ENCODE measurements at regions of chr2 and their contacts with region 1.

Region 1: GRCh38 chr2:187581125-187581896 is 27.1 kb upstream of the TFPI start:
- DNase-seq: peak; percentile 45
- H3K4me3 ChIP-seq: no peak overlapping the region
- H3K27ac ChIP-seq: peak overlapping the region; percentile 67
- H3K27me3 ChIP-seq: no peaks in the 10 kb centered on the region
- CTCF ChIP-seq: peak; percentile 57

Region 2: DNA sequence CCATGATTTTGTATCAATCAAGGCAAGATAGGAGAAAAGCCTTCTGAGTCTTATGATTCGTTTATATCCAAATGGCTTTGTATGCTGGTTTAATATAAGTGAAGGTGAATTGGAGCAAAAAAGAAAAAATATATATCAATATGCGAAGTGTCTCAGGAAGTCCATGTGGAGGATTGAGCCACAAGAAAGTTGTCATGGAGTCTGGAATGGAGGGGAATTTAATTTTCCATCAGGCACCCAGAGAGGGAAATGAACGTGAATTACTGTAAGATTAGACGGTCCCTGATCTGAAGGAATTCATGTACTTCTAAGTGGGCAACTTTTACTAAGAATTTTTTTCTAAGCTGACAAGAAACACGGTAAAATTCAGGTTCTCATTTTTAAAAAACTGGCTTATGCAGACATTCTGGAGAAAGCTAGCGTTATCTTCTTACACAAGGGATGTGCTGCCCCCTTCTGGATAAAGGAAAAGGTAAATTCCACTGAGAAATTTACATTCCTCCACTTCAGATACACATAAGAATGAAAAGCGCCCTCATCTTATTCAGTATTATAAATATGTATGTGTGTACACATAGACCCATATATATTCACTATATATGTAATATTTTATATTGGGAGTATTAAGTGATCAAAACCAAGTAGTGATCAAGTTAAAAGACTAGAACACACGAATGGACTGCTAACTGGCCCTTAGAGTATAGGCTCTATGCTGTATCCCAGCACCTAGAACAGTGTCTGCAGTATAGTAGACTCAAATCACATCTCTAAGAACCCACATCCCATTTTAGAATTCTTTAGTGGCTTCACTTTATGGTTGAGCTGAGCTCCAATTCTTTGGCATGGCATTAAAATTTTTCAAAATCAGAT is 261.9 kb after region 1 on chr2:
- in situ Hi-C with region 1: loop called (anchors 10 kb)
- DNase-seq: peak; percentile 58
- H3K4me3 ChIP-seq: no peak overlapping the region
- H3K27ac ChIP-seq: no peak overlapping the region
- H3K27me3 ChIP-seq: no peaks in the 10 kb centered on the region
- CTCF ChIP-seq: peak; percentile 50